Mammary epithelial cell (primary cell): ENCODE measurements at regions of chr1 and their contacts with region 1.

Region 1: GRCh38 chr1:10108134-10108663 is 75.4 kb downstream of the UBE4B start:
- DNase-seq: peak; percentile 88
- H3K4me3 ChIP-seq: no peak overlapping the region
- H3K27ac ChIP-seq: peak overlapping the region; percentile 50
- H3K4me1 ChIP-seq: peaks cover 26% of the 10 kb centered on the region
- H3K27me3 ChIP-seq: no peaks in the 10 kb centered on the region
- CTCF ChIP-seq: no peak

Region 2: DNA sequence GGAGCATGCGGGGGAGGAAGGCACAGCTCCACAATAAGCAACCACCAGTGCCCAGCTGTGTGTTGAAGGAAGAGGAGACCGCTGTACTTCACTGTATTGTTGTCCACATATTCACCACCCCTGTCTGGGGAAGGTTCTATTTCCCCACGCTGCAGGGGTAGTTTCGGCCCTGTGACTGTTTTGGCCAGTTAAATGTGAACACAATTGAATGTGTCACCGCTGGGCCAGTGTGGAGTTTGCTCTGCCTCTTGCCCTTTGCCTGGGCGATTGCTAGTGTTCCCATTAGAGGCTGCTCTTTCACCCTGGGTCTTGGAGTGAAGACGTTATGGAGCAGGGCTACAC is 42.9 kb before region 1 on chr1:
- CTCF ChIA-PET with region 1: no interaction called
- dilution Hi-C with region 1: loop called (anchors 5 kb)
- in situ Hi-C with region 1: no loop called
- intact Hi-C with region 1: loop called (anchors 5 kb)
- DNase-seq: no peak
- H3K4me3 ChIP-seq: no peak overlapping the region
- H3K27ac ChIP-seq: peak overlapping the region; percentile 92
- H3K4me1 ChIP-seq: peaks cover 50% of the 10 kb centered on the region
- H3K27me3 ChIP-seq: no peaks in the 10 kb centered on the region
- CTCF ChIP-seq: no peak

Region 3: GRCh38 chr1:10074059-10074851 is 33.9 kb before region 1 on chr1:
- CTCF ChIA-PET with region 1: no interaction called
- dilution Hi-C with region 1: loop called (anchors 5 kb)
- in situ Hi-C with region 1: no loop called
- intact Hi-C with region 1: no loop called
- DNase-seq: peak; percentile 96
- H3K4me3 ChIP-seq: no peak overlapping the region
- H3K27ac ChIP-seq: peak overlapping the region; percentile 62
- H3K4me1 ChIP-seq: peaks cover 32% of the 10 kb centered on the region
- H3K27me3 ChIP-seq: no peaks in the 10 kb centered on the region
- CTCF ChIP-seq: no peak